PC-3 (cell line): ENCODE measurements at regions of chr15 and their contacts with region 1.

Region 1: GRCh38 chr15:35751413-35752133 is 205.6 kb upstream of the DPH6 start:
- DNase-seq: peak; percentile 85
- ATAC-seq: peak; percentile 69
- H3K4me3 ChIP-seq: 0 out of 2 replicates have a peak overlapping the region, but pooled peaks have one; percentile 11
- H3K27ac ChIP-seq: no peak overlapping the region
- H3K4me1 ChIP-seq: peaks cover 36% of the 10 kb centered on the region
- H3K27me3 ChIP-seq: no peaks in the 10 kb centered on the region
- CTCF ChIP-seq: peak; percentile 88

Region 2: DNA sequence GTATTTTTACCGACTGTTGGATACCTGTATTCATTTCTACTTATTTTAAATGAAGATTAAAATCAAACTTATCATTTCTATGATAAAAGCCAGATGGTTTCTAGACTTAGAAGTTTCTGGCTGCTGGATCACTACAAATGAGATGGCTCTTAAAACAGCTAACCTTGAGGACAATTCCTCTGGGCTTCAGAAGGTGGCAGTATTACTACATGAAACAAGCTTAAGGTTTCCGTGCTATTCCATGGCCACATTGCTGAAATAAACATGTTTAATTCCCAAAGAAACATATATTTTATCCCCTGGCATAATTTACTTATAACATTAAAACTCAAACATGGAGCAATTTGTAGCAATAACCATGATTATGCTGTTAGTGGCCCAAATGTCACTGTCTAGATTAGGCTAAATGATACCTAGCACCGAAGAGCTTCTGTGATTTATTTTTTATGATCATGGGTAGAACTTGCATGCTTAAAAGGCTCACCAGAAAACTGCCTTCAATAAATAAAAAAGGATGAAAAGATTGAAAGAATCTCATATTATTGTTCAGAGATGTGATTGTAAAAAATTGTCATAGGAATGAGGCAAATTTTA is 462.5 kb before region 1 on chr15:
- CTCF ChIA-PET with region 1: interaction called, 3 read pairs
- POLR2A ChIA-PET with region 1: no interaction called
- intact Hi-C with region 1: loop called (anchors 5 kb)
- DNase-seq: peak; percentile 74
- ATAC-seq: peak; percentile 48
- H3K4me3 ChIP-seq: no peak overlapping the region
- H3K27ac ChIP-seq: no peak overlapping the region
- H3K4me1 ChIP-seq: peaks cover 16% of the 10 kb centered on the region
- H3K27me3 ChIP-seq: no peaks in the 10 kb centered on the region
- CTCF ChIP-seq: peak; percentile 92

Region 3: DNA sequence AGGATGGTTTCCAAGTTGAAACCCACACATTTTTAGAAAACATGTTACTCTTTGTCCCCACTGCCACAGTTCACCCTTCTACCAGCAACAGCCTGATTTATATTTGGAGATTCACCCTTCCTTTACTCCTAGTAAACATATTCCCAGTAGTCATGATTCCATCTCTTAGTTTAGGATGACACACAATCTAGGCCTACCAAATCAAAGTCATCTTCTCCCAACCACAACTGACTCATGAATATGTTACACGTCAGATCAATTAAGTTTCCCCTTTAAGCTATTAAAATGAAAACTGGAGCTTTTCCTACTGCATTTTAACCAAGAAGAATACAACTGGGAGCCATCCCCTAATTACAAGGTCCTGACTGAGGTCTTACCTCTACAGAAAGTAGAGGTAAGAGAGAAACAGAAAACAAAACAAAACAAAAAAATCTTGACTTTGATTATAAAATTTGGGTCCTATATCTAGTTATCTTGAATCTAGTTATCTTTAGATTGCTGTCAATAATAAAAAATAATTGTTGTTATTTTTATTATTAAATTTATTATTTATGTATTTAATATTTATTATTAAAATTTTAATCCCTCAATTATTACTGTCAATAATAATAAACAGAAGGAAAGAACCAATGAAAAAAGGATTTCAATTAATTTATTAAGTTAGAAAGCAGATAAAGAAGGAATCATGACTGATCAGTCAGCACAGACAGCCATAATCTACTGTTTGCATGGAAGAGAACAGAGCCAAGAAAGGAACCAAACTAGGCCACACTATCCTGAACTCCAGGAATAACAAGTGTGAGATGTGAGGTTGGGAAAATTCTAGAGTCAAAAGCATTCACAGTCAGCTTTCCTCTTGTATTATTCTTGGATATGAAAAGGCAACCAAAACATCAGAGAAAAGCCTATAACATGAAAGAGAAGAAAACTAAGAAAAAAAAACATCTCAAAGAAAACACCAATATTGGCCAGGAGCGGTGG is 218.2 kb before region 1 on chr15:
- CTCF ChIA-PET with region 1: no interaction called
- POLR2A ChIA-PET with region 1: no interaction called
- intact Hi-C with region 1: no loop called
- DNase-seq: peak; percentile 60
- ATAC-seq: peak; percentile 56; the same call in 1 of the 2 replicates
- H3K4me3 ChIP-seq: no peak overlapping the region
- H3K27ac ChIP-seq: no peak overlapping the region
- H3K4me1 ChIP-seq: peaks cover 5% of the 10 kb centered on the region; the same call in 1 of the 2 replicates
- H3K27me3 ChIP-seq: no peaks in the 10 kb centered on the region
- CTCF ChIP-seq: no peak

Region 4: DNA sequence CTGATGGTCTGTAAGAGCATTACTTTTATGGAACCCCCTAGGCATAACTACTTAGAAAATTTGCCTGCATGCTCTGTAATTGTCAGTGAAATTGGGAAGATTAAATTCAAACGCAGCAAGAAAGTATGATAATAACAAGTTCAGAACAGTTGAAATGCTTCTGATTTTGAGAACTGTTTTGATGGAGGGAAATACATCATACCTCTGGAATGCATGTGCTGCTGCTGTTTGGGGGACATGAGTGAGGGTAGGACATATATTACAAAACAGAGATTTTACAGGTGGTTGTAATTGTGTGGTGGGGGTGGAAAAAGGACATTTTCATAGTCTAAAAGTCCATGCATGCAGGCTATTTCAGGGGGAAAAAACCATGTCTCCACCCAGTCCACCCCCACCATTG is 70.6 kb before region 1 on chr15:
- CTCF ChIA-PET with region 1: no interaction called
- POLR2A ChIA-PET with region 1: no interaction called
- intact Hi-C with region 1: no loop called
- DNase-seq: no peak
- ATAC-seq: no peak
- H3K4me3 ChIP-seq: no peak overlapping the region
- H3K27ac ChIP-seq: no peak overlapping the region
- H3K4me1 ChIP-seq: no peaks in the 10 kb centered on the region
- H3K27me3 ChIP-seq: no peaks in the 10 kb centered on the region
- CTCF ChIP-seq: no peak

Region 5: GRCh38 chr15:35697549-35698299 is 53.8 kb before region 1 on chr15:
- CTCF ChIA-PET with region 1: interaction called, 7 read pairs
- POLR2A ChIA-PET with region 1: no interaction called
- intact Hi-C with region 1: loop called (anchors 2 kb)
- DNase-seq: peak; percentile 58
- ATAC-seq: peak; percentile 38
- H3K4me3 ChIP-seq: no peak overlapping the region
- H3K27ac ChIP-seq: no peak overlapping the region
- H3K4me1 ChIP-seq: peaks cover 22% of the 10 kb centered on the region
- H3K27me3 ChIP-seq: no peaks in the 10 kb centered on the region
- CTCF ChIP-seq: peak; percentile 62

Region 6: GRCh38 chr15:35912196-35912595 is 160.6 kb after region 1 on chr15:
- CTCF ChIA-PET with region 1: no interaction called
- POLR2A ChIA-PET with region 1: no interaction called
- intact Hi-C with region 1: loop called (anchors 1 kb)
- DNase-seq: peak; percentile 50
- ATAC-seq: peak; percentile 84
- H3K4me3 ChIP-seq: no peak overlapping the region
- H3K27ac ChIP-seq: no peak overlapping the region
- H3K4me1 ChIP-seq: no peaks in the 10 kb centered on the region
- H3K27me3 ChIP-seq: no peaks in the 10 kb centered on the region
- CTCF ChIP-seq: peak; percentile 57

Region 7: GRCh38 chr15:36278219-36278618 is 526.6 kb after region 1 on chr15:
- CTCF ChIA-PET with region 1: no interaction called
- POLR2A ChIA-PET with region 1: no interaction called
- intact Hi-C with region 1: loop called (anchors 5 kb)
- DNase-seq: peak; percentile 76
- ATAC-seq: peak; percentile 79
- H3K4me3 ChIP-seq: no peak overlapping the region
- H3K27ac ChIP-seq: no peak overlapping the region
- H3K4me1 ChIP-seq: no peaks in the 10 kb centered on the region
- H3K27me3 ChIP-seq: no peaks in the 10 kb centered on the region
- CTCF ChIP-seq: peak; percentile 78

Region 8: DNA sequence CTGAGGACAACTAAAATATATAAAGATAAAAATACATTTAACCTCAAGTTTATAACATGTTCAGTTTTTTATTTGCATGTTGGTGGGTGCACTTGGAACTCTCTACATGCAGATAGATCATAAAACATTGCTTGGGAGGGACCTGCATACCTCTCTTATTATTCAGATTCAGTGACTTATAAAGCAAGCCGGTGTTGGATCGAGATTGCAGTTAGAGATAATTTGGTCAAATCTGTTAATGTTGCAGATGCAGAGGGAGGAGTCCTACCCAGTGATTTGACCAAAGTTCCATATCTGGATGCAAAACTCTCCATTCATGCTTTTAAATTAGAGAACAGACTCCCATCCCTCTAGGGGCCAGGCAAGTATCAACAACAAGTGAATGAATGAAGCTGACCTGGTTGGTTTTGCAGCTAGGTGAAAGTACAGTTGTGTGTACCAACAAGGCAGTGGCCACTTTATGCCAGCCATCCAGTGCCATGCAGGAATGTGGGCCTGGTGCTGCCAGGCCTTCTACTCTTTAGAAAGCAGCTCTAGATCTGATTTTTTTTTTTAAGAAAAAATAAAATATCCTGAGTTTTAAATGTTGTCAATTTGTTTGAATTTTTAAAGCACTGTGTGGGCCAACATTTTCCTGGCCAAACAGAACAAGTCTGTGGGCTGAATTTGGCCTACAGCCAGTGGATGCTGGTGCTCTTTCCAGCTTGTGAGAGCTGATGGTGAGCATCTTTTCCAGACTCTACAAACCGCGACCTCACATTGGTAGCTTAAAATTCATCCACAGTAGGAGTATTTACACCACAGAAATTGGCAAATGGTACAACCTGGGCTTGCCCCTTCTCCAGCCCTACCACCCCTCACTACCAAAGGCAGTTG is 840.2 kb after region 1 on chr15:
- CTCF ChIA-PET with region 1: no interaction called
- POLR2A ChIA-PET with region 1: no interaction called
- intact Hi-C with region 1: loop called (anchors 1 kb)
- DNase-seq: peak; percentile 88
- ATAC-seq: peak; percentile 37
- H3K4me3 ChIP-seq: peak overlapping the region; percentile 17; the same call in 1 of the 2 replicates
- H3K27ac ChIP-seq: peak overlapping the region; percentile 95
- H3K4me1 ChIP-seq: peaks cover 69% of the 10 kb centered on the region
- H3K27me3 ChIP-seq: no peaks in the 10 kb centered on the region
- CTCF ChIP-seq: peak; percentile 33; the same call in 1 of the 2 replicates